AG04449 (cell line): ENCODE measurements at regions of chr1 and their contacts with region 1.

Region 1: DNA sequence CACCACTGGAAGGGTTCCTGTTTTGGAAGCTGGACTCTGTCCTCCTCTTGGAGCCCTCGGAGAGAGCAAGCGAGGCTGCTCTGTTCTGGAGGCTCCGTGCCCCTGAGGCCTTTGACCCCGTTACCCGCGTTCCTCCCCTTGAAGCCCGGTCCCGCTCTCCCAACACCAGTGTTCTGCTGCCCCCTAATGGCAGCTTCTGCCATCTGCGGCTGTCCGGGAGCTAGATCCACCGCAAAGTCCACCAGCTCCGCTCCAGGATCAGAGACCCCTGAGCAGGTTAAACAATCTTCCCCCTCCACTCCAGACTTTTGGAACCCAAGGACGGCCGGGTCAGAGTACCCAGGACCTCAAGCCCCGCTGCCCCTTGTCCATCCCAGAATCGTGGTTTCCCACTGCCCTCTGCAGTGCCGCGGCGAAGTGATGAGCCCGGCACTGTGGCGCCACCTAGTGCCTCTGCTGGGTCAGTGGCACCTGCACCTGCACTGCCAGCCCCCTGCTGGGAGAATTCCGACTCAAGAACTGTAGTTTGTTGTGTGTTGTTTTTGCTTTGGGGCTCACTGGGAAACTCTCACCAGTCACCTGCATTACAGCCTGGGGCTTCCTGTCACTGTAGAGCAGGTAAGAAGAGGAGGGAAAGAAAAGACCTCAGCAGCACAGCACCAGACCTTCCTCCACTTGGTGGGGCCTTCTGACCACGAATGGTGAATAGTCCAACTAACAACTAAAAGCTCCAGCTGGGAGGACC is 63.5 kb upstream of the NFASC start:
- DNase-seq: no peak
- H3K4me3 ChIP-seq: peak overlapping the region; percentile 59
- CTCF ChIP-seq: peak; percentile 99

Region 2: DNA sequence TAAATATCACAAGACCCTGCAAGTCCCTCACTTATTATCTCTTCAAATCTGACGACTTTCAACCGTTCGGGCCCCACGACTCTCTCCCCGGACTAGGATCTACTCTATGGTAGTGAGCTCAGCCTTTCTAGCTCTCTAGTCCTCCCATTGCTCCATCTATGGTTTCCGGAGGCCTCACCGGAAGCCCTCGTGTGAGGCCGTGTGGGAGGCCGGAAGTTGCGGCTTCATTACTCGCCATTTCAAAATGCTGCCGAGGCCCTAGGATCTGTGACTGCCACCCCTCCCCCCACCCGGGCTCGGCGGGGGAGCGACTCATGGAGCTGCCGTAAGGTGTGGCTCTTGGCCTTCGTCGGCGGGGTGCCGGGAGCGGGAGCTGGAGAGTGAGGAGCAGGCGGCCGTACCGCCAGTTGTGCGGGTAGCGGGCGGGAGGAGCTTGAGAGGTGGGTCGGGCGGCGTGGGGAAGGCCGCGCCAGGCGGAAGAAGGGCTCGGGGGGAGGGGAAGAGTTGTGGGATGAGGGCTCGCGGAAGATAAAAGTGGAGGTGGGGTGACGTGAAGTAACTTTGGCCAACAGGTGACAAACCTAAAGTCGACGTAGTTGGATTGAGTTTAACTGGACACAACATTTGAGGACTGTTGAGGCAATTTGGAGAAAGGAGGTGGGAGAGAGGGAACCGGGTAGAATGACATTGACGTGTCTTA is 290.8 kb before region 1 on chr1 and contains the start of gene MDM4:
- CTCF ChIA-PET with region 1: interaction called, 20 read pairs
- POLR2A ChIA-PET with region 1: no interaction called
- DNase-seq: peak; percentile 83
- H3K4me3 ChIP-seq: peak within 1 kb of the TSS; percentile 90
- CTCF ChIP-seq: no peak

Region 3: GRCh38 chr1:204578867-204579664 is 228.0 kb before region 1 on chr1:
- CTCF ChIA-PET with region 1: interaction called, 673 read pairs
- POLR2A ChIA-PET with region 1: no interaction called
- DNase-seq: no peak
- H3K4me3 ChIP-seq: no peak overlapping the region
- CTCF ChIP-seq: no peak

Region 4: GRCh38 chr1:204769997-204770396 is 37.1 kb before region 1 on chr1:
- CTCF ChIA-PET with region 1: interaction called, 24 read pairs
- POLR2A ChIA-PET with region 1: no interaction called
- DNase-seq: no peak
- H3K4me3 ChIP-seq: no peak overlapping the region
- CTCF ChIP-seq: no peak

Region 5: GRCh38 chr1:204888294-204888693 is 81.2 kb after region 1 on chr1:
- CTCF ChIA-PET with region 1: interaction called, 13 read pairs
- POLR2A ChIA-PET with region 1: no interaction called
- DNase-seq: peak; percentile 40
- H3K4me3 ChIP-seq: no peak overlapping the region
- CTCF ChIP-seq: no peak

Region 6: DNA sequence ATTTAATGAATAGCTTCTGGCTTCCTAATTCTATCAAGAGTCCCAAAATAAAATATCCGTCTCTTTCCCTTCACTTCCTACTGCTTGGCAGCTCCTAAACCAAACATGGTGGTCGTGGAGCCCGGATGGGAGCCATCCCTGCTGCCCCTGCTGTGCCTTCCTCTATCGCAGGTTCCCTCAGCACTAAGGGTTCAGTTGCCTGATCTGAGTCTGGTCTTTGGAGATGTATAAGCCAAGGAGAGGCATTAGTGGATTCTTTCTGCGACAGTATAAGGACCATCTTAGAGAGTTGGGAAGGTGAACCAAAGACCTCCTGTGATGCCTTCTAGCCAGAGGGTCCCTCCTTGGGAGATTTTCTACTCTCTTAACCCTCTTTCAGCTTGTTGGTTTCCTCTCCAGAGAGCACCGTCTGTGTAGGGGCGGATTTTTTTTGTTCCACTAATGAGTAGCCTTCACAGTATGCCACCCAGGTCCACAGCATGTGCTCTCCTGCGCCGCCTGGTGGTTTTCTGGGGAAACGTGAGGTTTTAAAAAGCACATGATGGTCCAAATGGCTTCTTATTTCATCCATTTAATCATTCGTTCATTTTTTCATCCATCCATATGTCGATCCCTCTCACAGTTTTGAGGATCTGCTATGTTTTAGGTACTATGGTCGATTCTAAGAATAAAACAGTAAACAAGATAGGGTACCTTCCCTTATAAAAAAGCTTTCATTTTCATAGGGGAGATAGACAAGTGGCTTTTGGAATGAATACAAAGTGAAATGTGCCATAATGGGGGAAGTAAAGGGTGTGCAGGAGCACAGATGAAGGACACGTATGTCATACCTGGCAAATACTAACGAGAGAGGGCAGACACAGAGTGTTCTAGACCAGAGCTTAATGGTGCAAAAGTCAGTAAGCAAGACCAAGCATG is 134.6 kb after region 1 on chr1:
- CTCF ChIA-PET with region 1: interaction called, 320 read pairs
- POLR2A ChIA-PET with region 1: no interaction called
- DNase-seq: no peak
- H3K4me3 ChIP-seq: no peak overlapping the region
- CTCF ChIP-seq: peak; percentile 78

Region 7: DNA sequence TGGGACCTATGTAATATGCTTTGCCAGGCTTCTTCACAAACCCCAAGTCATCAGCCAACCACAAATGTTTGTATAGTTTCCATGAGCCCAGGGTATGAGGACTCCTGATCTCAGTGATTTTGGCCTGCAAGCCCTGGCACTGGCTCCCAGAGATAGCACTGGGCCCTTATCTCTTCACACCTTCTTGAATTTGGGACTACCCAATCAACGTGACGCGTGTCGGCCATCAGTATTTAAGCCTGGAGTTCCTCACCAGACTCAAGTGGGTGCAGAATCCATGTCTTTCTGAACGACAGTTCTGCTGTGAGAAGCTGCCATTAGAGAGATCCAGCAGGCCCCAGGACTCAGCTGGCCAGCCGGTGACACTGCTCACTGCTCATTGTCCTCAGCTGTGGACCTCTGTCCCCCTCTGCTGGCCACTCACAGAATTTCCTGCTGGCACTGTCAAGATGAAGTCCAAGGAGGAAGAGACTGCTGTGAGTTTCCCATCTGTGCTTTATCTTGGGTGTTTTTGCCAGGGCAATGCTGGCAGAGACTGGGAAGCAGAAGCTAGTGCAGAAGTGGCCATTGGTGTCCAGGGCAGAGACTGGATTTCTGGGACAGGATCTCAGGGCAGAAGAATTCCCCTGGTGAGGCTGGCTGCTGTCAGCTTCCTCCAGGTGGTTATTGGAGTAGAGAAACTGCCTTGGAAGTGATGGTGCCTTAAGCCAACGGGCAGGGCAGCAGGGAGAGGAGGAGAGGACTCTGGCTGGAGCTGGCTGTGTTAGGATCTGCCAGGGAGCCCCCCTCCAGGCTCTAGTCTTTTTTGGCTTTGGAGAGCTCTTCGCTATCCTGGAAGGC is 449.0 kb after region 1 on chr1:
- CTCF ChIA-PET with region 1: interaction called, 12 read pairs
- POLR2A ChIA-PET with region 1: no interaction called
- DNase-seq: peak; percentile 26
- H3K4me3 ChIP-seq: no peak overlapping the region
- CTCF ChIP-seq: peak; percentile 90